ENCODE measurements at regions of chr12 and their contacts with region 1.

Region 1: GRCh38 chr12:47397664-47398281 is 308.1 kb downstream of the RPAP3 start:
- DNase-seq: no peak
- H3K4me3 Mint-ChIP-seq: no peak overlapping the region
- H3K27ac Mint-ChIP-seq: peak overlapping the region; percentile 84
- H3K4me1 Mint-ChIP-seq: peaks cover 80% of the 10 kb centered on the region
- H3K27me3 Mint-ChIP-seq: no peaks in the 10 kb centered on the region

Region 2: GRCh38 chr12:46209914-46210872 is 1187.6 kb before region 1 on chr12:
- intact Hi-C with region 1: loop called (anchors 10 kb)
- DNase-seq: peak; percentile 36
- H3K4me3 Mint-ChIP-seq: peak overlapping the region; percentile 45
- H3K27ac Mint-ChIP-seq: peak overlapping the region; percentile 96
- H3K4me1 Mint-ChIP-seq: peaks cover 63% of the 10 kb centered on the region
- H3K27me3 Mint-ChIP-seq: no peaks in the 10 kb centered on the region

Region 3: GRCh38 chr12:46577063-46577776 is 820.6 kb before region 1 on chr12:
- intact Hi-C with region 1: no loop called
- DNase-seq: no peak
- H3K4me3 Mint-ChIP-seq: no peak overlapping the region
- H3K27ac Mint-ChIP-seq: no peak overlapping the region
- H3K4me1 Mint-ChIP-seq: peaks cover 6% of the 10 kb centered on the region
- H3K27me3 Mint-ChIP-seq: no peaks in the 10 kb centered on the region

Region 4: DNA sequence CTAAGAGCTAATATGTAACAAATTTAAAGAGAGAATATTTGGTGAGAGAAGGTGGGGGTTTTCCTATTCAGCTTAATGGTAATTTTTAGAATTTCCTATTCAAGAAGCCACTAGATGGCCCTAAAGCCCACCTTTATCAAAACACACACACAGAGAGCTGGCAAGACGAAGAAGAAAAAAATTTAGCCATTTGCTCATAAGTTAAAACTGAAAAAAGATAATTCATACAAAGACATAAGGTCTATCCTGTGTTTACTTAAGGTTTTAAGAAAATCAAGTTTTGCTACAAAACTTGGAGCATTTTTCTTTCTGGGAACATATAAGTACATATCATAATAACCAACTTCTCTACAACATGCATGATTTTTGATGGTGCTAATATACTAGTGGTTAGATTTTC is 365.1 kb before region 1 on chr12:
- intact Hi-C with region 1: loop called (anchors 2 kb)
- DNase-seq: no peak
- H3K4me3 Mint-ChIP-seq: no peak overlapping the region
- H3K27ac Mint-ChIP-seq: no peak overlapping the region
- H3K4me1 Mint-ChIP-seq: peaks cover 13% of the 10 kb centered on the region
- H3K27me3 Mint-ChIP-seq: peaks cover 2% of the 10 kb centered on the region

Region 5: DNA sequence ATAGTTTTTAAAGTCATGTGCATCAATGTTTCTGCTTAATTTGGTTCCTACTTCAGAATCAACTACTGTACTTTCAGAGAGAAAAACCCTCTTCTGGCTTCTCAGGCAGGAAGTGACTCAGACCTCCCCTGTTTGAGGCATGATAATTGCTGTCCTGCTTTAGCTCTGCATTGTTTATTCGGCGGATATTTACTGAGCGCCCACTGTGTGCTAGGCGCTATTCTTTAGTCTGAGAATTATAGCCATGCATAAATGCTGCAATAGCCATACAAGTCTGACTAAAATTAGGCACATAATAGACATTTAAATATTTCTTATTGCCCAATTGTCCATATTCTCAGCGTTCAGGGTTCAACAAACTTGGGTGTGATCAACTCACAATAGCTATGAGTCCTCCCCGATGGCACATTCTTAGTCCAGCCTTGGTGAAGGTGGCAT is 311.9 kb before region 1 on chr12:
- intact Hi-C with region 1: loop called (anchors 2 kb)
- DNase-seq: no peak
- H3K4me3 Mint-ChIP-seq: no peak overlapping the region
- H3K27ac Mint-ChIP-seq: peak overlapping the region; percentile 48
- H3K4me1 Mint-ChIP-seq: peaks cover 55% of the 10 kb centered on the region
- H3K27me3 Mint-ChIP-seq: no peaks in the 10 kb centered on the region

Region 6: GRCh38 chr12:47276621-47277309 is 121.0 kb before region 1 on chr12:
- intact Hi-C with region 1: loop called (anchors 2 kb)
- DNase-seq: peak; percentile 65
- H3K4me3 Mint-ChIP-seq: peak overlapping the region; percentile 48
- H3K27ac Mint-ChIP-seq: peak overlapping the region; percentile 81
- H3K4me1 Mint-ChIP-seq: peaks cover 74% of the 10 kb centered on the region
- H3K27me3 Mint-ChIP-seq: no peaks in the 10 kb centered on the region

Region 7: GRCh38 chr12:47307680-47308399 is 89.9 kb before region 1 on chr12:
- intact Hi-C with region 1: loop called (anchors 1 kb)
- DNase-seq: peak; percentile 46
- H3K4me3 Mint-ChIP-seq: peak overlapping the region; percentile 89
- H3K27ac Mint-ChIP-seq: peak overlapping the region; percentile 91
- H3K4me1 Mint-ChIP-seq: peaks cover 47% of the 10 kb centered on the region
- H3K27me3 Mint-ChIP-seq: no peaks in the 10 kb centered on the region

Region 8: DNA sequence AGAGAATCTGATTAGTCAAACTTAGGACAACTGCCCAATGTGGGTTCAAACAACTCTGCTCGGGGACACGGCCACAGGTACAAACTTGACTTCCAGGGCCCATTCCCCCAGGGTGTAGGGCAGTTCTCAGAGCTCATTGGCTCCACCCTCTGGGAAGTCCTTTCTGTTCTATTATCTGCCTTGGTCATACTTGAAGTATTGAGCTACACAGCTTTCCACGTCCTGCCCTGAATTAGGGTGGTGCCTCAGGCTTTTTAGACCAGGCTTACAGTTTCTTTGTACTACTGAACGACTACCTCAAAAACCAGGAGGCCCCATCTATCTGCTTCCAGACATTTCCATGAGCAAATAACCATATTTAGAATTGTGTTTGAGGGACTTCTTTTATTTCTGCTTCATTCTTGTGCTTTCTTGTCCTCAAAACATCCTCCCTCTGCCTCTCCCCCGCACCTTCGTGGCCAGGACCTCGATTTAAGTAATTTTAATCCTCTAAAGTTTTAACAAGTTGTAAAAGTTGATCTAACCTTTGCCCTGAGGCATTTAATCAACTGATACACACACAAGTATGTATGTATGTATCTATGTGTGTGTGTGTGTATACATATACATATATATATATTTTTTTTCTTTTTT is 36.3 kb before region 1 on chr12:
- intact Hi-C with region 1: loop called (anchors 2 kb)
- DNase-seq: peak; percentile 46
- H3K4me3 Mint-ChIP-seq: peak overlapping the region; percentile 67
- H3K27ac Mint-ChIP-seq: peak overlapping the region; percentile 95
- H3K4me1 Mint-ChIP-seq: peaks cover 51% of the 10 kb centered on the region
- H3K27me3 Mint-ChIP-seq: no peaks in the 10 kb centered on the region

Region 9: DNA sequence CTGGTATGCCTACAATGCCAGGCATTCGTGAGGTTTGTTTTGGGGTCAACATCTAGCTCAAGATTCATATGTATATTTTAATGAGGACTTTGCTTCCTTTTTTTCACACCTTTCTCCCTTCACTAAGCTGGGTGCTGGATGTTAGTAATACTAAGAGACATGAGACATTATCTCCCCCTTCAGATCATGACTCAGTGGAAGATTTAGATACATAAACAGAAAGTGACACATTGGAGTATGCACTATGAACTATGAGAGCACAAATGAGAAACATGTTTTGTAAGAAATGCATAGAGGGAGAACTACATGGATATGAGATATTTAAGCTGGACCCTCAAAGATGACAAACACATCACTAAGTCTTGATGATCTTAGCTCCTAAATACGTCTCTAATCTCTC is 21.7 kb after region 1 on chr12:
- intact Hi-C with region 1: no loop called
- DNase-seq: no peak
- H3K4me3 Mint-ChIP-seq: no peak overlapping the region
- H3K27ac Mint-ChIP-seq: peak overlapping the region; percentile 7
- H3K4me1 Mint-ChIP-seq: peaks cover 17% of the 10 kb centered on the region
- H3K27me3 Mint-ChIP-seq: no peaks in the 10 kb centered on the region